HEK293 (cell line): ENCODE measurements at regions of chr6 and their contacts with region 1.

Region 1: GRCh38 chr6:722077-722524 is 29.2 kb upstream of the EXOC2 start:
- H3K4me3 ChIP-seq: no peak overlapping the region
- H3K27ac ChIP-seq: no peak overlapping the region
- H3K4me1 ChIP-seq: no peaks in the 10 kb centered on the region
- CTCF ChIP-seq: peak; percentile 72

Region 2: GRCh38 chr6:593139-593906 is 128.8 kb before region 1 on chr6:
- CTCF ChIA-PET with region 1: interaction called, 49 read pairs
- POLR2A ChIA-PET with region 1: no interaction called
- H3K4me3 ChIP-seq: no peak overlapping the region
- H3K27ac ChIP-seq: no peak overlapping the region
- H3K4me1 ChIP-seq: no peaks in the 10 kb centered on the region; the same call in 1 of the 2 replicates
- CTCF ChIP-seq: no peak

Region 3: GRCh38 chr6:692855-693722 is 29.0 kb before region 1 on chr6 and contains the start of gene EXOC2:
- CTCF ChIA-PET with region 1: interaction called, 12 read pairs
- POLR2A ChIA-PET with region 1: no interaction called
- H3K4me3 ChIP-seq: peak within 1 kb of the TSS; percentile 67
- H3K27ac ChIP-seq: peak within 1 kb of the TSS; percentile 92
- H3K4me1 ChIP-seq: peaks cover 11% of the 10 kb centered on the region
- CTCF ChIP-seq: no peak

Region 4: GRCh38 chr6:710601-711571 is 11.2 kb before region 1 on chr6:
- CTCF ChIA-PET with region 1: interaction called, 30 read pairs
- POLR2A ChIA-PET with region 1: no interaction called
- H3K4me3 ChIP-seq: peak overlapping the region; percentile 19
- H3K27ac ChIP-seq: peak overlapping the region; percentile 47; the same call in 1 of the 2 replicates
- H3K4me1 ChIP-seq: peaks cover 10% of the 10 kb centered on the region
- CTCF ChIP-seq: no peak

Region 5: DNA sequence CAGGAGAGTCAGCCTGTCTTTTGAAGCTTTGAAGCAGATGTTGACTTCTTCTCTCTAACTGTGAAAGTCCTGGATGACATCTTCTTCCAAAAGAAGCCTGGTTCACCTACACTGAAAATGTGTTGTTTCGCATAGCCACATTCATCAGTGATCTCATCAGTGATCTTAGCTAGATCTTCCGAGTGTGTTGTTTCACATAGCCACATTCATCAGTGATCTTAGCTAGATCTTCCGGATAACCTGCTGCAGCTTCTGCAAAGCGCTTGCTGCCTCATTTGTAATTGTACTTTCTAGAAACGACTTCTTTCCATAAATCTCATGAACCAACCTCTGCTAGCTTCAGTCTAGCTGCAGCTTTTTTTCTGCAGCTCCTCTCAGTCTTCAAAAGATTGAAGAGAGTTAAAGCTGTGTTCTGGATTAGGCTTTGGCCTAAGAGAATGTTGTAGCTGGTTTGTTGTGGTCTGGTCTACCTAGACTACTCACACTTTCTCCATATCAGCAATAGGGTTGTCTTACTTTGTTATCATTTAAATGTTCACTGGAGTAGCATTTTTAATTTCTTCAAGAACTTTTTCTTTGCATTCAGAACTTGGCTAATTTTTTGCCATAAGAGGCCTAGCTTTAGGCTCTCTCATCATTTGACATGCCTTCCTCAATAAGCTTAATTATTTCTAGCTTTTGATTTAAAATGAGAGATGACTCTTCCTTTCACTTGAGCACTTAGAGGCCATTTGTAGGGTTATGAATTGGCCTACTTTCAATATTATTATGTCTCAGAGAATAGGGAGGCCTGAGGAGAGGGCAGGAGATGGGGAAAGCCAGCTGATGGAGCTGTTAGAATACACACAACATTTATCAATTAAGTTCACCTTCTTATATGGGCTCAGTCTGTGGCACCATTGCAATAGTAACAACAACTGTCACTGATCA is 19.6 kb after region 1 on chr6:
- CTCF ChIA-PET with region 1: interaction called, 21 read pairs
- POLR2A ChIA-PET with region 1: no interaction called
- H3K4me3 ChIP-seq: no peak overlapping the region
- H3K27ac ChIP-seq: no peak overlapping the region
- H3K4me1 ChIP-seq: no peaks in the 10 kb centered on the region
- CTCF ChIP-seq: no peak

Region 6: GRCh38 chr6:753486-753885 is 31.4 kb after region 1 on chr6:
- CTCF ChIA-PET with region 1: interaction called, 11 read pairs
- POLR2A ChIA-PET with region 1: no interaction called
- H3K4me3 ChIP-seq: no peak overlapping the region
- H3K27ac ChIP-seq: no peak overlapping the region
- H3K4me1 ChIP-seq: no peaks in the 10 kb centered on the region
- CTCF ChIP-seq: no peak